Mammary epithelial cell (primary cell): ENCODE measurements at regions of chr3 and their contacts with region 1.

Region 1: GRCh38 chr3:181694805-181695660 is 16.7 kb upstream of the SOX2 start:
- DNase-seq: no peak
- H3K4me3 ChIP-seq: peak overlapping the region; percentile 5 to 28 (median 17)
- H3K27ac ChIP-seq: no peak overlapping the region
- H3K4me1 ChIP-seq: peaks cover 17% of the 10 kb centered on the region
- H3K27me3 ChIP-seq: no peaks in the 10 kb centered on the region
- CTCF ChIP-seq: no peak

Region 2: GRCh38 chr3:181210275-181210674 is 484.8 kb before region 1 on chr3:
- CTCF ChIA-PET with region 1: no interaction called
- dilution Hi-C with region 1: no loop called
- in situ Hi-C with region 1: loop called (anchors 10 to 25 kb)
- intact Hi-C with region 1: loop called (anchors 1 kb)
- DNase-seq: peak; percentile 2
- H3K4me3 ChIP-seq: no peak overlapping the region
- H3K27ac ChIP-seq: no peak overlapping the region
- H3K4me1 ChIP-seq: no peaks in the 10 kb centered on the region
- H3K27me3 ChIP-seq: peaks cover 6% of the 10 kb centered on the region
- CTCF ChIP-seq: peak in 1 of 2 donors; percentile 35

Region 3: DNA sequence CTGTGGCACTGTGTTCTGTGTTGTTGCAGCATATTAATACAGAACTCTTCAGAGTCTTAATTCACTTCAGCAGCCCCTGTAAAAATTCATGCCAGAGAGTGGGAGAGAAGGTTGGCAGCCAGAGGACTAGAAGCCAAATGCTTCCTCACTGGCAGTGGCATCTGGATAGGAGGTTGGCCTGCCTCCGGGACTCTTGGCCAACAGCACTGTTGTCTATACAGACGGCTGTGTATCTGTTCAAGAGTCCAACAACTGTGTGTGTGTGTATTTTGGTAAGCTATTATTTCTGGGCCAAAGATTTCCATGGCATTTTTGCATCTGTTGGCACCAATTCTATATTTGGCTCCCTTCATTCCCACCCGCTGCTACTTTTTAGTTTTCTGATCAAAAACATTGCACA is 139.4 kb before region 1 on chr3:
- CTCF ChIA-PET with region 1: no interaction called
- dilution Hi-C with region 1: no loop called
- in situ Hi-C with region 1: loop called (anchors 10 kb)
- intact Hi-C with region 1: no loop called
- DNase-seq: no peak
- H3K4me3 ChIP-seq: no peak overlapping the region
- H3K27ac ChIP-seq: no peak overlapping the region
- H3K4me1 ChIP-seq: no peaks in the 10 kb centered on the region
- H3K27me3 ChIP-seq: no peaks in the 10 kb centered on the region
- CTCF ChIP-seq: no peak